ENCODE measurements at regions of chr14 and their contacts with region 1.

Region 1: GRCh38 chr14:20413045-20413799 is at the start of gene TEP1:
- DNase-seq: peak; percentile 34
- H3K4me3 ChIP-seq: peak within 1 kb of the TSS; percentile 67
- H3K27me3 ChIP-seq: no peaks in the 10 kb centered on the region
- CTCF ChIP-seq: no peak
- polyA plus RNA-seq, gene TEP1: 12.2 and 12.7 TPM in 2 replicates

Region 2: GRCh38 chr14:20427231-20428009 is 14.2 kb after region 1 on chr14:
- CTCF ChIA-PET with region 1: interaction called, 25 read pairs
- POLR2A ChIA-PET with region 1: no interaction called
- DNase-seq: no peak
- H3K4me3 ChIP-seq: no peak overlapping the region
- H3K27me3 ChIP-seq: no peaks in the 10 kb centered on the region
- CTCF ChIP-seq: no peak

Region 3: GRCh38 chr14:20454516-20455354 is 41.5 kb after region 1 on chr14 and contains the starts of genes APEX1 and OSGEP:
- CTCF ChIA-PET with region 1: interaction called, 16 read pairs
- POLR2A ChIA-PET with region 1: no interaction called
- DNase-seq: peak; percentile 93
- H3K4me3 ChIP-seq: peak within 1 kb of the TSS; percentile 65
- H3K27me3 ChIP-seq: no peaks in the 10 kb centered on the region
- CTCF ChIP-seq: no peak
- polyA plus RNA-seq, gene APEX1: 219 and 237 TPM in 2 replicates
- polyA plus RNA-seq, gene OSGEP: 21.2 and 28.9 TPM in 2 replicates

Region 4: GRCh38 chr14:20539906-20540305 is 126.7 kb after region 1 on chr14:
- CTCF ChIA-PET with region 1: no interaction called
- POLR2A ChIA-PET with region 1: no interaction called
- DNase-seq: no peak
- H3K4me3 ChIP-seq: no peak overlapping the region
- H3K27me3 ChIP-seq: no peaks in the 10 kb centered on the region
- CTCF ChIP-seq: no peak

Region 5: DNA sequence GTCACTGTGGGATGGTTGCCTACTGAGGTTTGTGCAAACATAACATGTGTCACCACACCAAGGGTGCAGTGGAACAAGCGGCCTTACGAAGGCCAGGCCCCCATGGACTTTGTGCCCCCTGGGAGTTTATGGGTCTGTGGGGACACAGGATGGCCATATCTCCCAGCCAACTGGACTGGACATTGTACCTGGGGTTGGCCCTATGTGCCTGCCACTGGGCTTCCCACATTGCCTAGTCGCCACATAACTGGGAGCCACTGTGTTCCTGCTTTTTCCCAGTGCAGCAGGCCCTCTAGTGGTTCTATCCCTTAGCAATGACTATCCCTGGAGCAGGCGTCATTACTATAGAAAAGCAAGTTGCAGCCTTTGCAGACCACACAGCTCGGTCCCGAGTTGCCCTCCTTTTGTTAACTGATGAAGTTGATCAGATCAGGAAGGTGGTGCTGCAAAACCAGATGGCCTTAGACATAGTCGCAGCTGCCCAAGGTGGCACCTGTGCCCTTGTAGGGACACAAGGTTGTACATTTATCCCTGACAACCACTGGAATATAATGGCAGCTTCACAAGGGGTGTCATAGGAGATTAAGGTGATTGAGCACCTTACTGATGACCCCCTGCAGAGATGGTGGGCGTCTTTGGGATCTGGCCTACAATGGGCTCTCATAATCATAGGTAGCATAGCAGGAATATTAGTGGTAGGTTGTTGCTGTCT is 193.1 kb after region 1 on chr14:
- CTCF ChIA-PET with region 1: interaction called, 14 read pairs
- POLR2A ChIA-PET with region 1: interaction called, 19 read pairs
- DNase-seq: no peak
- H3K4me3 ChIP-seq: no peak overlapping the region
- H3K27me3 ChIP-seq: no peaks in the 10 kb centered on the region
- CTCF ChIP-seq: peak; percentile 53

Measured in BJ (cell line).